ENCODE measurements at regions of chr20 and their contacts with region 1.

Region 1: DNA sequence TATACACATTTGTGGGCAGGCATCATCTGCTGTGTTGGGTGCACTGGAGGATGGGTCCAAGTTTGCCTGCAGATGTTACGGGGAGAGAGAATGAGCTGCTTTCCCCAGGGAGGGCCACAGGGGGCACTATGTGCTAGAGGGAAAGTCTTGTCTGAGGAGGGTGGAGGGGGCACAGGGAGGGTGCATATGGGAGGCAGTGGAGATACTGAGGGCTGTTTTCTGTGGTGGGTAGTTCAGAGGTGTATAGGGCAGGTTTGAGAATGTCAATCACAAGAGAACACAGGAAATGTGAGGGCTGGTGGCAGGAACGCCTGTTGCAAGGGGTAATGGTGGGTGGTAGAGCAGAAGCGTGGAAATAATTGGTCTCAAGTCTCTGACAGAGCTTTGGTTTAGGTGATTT is 7.7 kb upstream of the PTPRA start:
- DNase-seq: no peak
- H3K4me3 ChIP-seq: no peak overlapping the region
- H3K27ac ChIP-seq: no peak overlapping the region
- H3K4me1 ChIP-seq: peaks cover 0 to 5% of the 10 kb centered on the region in 2 donors
- H3K27me3 ChIP-seq: no peaks in the 10 kb centered on the region
- CTCF ChIP-seq: no peak
- POLR2A ChIP-seq: no peak

Region 2: GRCh38 chr20:2991532-2991931 is 125.9 kb after region 1 on chr20:
- intact Hi-C with region 1: loop called in 1 of 2 experiments (anchors 10 kb)
- DNase-seq: no peak
- H3K4me3 ChIP-seq: no peak overlapping the region
- H3K27ac ChIP-seq: no peak overlapping the region
- H3K4me1 ChIP-seq: no peaks in the 10 kb centered on the region
- H3K27me3 ChIP-seq: no peaks in the 10 kb centered on the region
- CTCF ChIP-seq: no peak
- POLR2A ChIP-seq: no peak

Region 3: DNA sequence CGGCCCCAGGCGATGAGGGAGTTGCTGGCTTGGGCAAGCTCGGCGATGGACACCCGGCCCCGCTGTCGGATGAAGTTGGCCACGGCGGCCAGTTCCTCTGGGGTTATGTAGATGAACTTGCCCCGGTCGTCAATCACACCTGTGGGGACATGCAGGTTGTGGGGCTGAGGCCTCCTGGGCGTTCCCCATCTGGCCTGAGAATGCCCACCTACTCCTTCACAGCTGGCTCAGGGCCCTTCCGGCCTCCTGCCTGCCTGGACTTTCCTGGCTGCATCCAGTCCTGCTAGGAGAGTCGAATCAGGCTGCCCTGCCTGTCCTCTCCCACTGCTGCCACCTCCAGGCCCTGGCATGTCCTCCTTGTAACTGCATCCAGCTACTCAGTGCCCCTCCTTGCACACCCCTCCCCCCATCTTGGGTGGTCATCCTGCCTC is 325.1 kb after region 1 on chr20:
- intact Hi-C with region 1: no loop called
- DNase-seq: no peak
- H3K4me3 ChIP-seq: no peak overlapping the region
- H3K27ac ChIP-seq: no peak overlapping the region
- H3K4me1 ChIP-seq: no peaks in the 10 kb centered on the region
- H3K27me3 ChIP-seq: no peaks in the 10 kb centered on the region
- CTCF ChIP-seq: no peak
- POLR2A ChIP-seq: no peak